Activated B cell treated with CpG ODN at 0.5 μM for 24 hours (primary cell): ENCODE measurements at regions of chr3 and their contacts with region 1.

Region 1: DNA sequence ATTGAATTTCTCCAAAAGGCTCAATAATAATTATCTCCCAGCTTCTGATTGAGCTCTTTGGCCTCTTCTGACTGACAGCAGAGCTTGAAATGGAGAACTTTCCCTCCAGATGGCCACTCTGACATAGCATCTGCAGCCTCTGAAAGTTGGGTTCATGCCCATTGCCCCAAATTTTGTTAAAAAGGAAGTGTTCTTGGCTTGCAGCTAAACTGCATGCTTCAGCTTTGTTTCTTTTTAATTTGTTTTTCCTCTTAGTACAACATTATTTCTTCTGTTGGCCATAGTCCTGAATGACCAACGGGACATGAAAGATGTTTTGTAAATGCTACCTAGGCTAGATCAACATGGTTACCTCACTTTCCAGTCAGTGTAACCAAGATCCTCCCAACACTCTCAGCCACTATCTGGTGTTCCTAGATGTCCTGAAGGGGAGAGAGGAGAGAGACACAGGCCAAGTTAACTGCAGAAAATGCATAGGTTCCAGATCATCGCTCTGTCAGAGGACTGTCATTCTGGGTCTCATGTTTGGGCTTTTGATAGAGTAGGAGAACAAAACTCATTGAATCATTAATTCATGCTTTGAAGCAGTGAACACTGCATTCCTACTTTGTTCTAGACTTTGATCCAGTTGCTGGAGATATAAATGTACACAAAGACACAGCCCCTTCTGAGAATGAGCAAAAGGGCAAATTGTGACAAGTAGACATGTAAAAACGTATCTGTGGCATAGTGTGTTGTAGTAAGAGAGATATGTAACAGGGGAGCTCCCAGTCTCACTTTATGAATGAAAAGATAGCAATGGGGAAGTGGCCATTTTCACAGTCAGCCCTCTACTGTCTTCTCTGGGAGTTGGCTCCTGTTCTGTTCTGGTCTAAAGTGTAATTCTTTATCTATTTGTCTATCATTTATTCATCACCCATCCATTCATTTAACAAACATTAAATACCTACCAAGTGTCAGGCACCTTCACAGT is 156.2 kb downstream of the ZNF621 start:
- DNase-seq: no peak
- ATAC-seq: peak; percentile 80
- H3K4me3 Mint-ChIP-seq: no peak overlapping the region
- H3K27ac Mint-ChIP-seq: peak overlapping the region; percentile 3
- H3K4me1 Mint-ChIP-seq: peaks cover 22% of the 10 kb centered on the region
- H3K27me3 Mint-ChIP-seq: no peaks in the 10 kb centered on the region
- CTCF ChIP-seq: no peak

Region 2: GRCh38 chr3:40608091-40608490 is 72.9 kb before region 1 on chr3:
- CTCF ChIA-PET with region 1: no interaction called
- POLR2A ChIA-PET with region 1: no interaction called
- intact Hi-C with region 1: loop called (anchors 5 kb)
- DNase-seq: no peak
- ATAC-seq: no peak
- H3K4me3 Mint-ChIP-seq: no peak overlapping the region
- H3K27ac Mint-ChIP-seq: no peak overlapping the region
- H3K4me1 Mint-ChIP-seq: peaks cover 8% of the 10 kb centered on the region
- H3K27me3 Mint-ChIP-seq: peaks cover 16% of the 10 kb centered on the region
- CTCF ChIP-seq: no peak

Region 3: GRCh38 chr3:40701016-40701588 is 20.1 kb after region 1 on chr3:
- CTCF ChIA-PET with region 1: no interaction called
- POLR2A ChIA-PET with region 1: no interaction called
- intact Hi-C with region 1: no loop called
- DNase-seq: no peak
- ATAC-seq: no peak
- H3K4me3 Mint-ChIP-seq: no peak overlapping the region
- H3K27ac Mint-ChIP-seq: no peak overlapping the region
- H3K4me1 Mint-ChIP-seq: no peaks in the 10 kb centered on the region
- H3K27me3 Mint-ChIP-seq: no peaks in the 10 kb centered on the region
- CTCF ChIP-seq: no peak

Region 4: GRCh38 chr3:41872157-41872556 is 1191.2 kb after region 1 on chr3:
- CTCF ChIA-PET with region 1: no interaction called
- POLR2A ChIA-PET with region 1: no interaction called
- intact Hi-C with region 1: loop called (anchors 10 kb)
- DNase-seq: no peak
- ATAC-seq: no peak
- H3K4me3 Mint-ChIP-seq: no peak overlapping the region
- H3K27ac Mint-ChIP-seq: no peak overlapping the region
- H3K4me1 Mint-ChIP-seq: no peaks in the 10 kb centered on the region
- H3K27me3 Mint-ChIP-seq: no peaks in the 10 kb centered on the region
- CTCF ChIP-seq: no peak